K562 (cell line): ENCODE measurements at regions of chr7 and their contacts with region 1.

Region 1: GRCh38 chr7:155598810-155599210 is 45.7 kb upstream of the RBM33 start:
- DNase-seq: peak; percentile 82 to 90 (median 88)
- ATAC-seq: peak; percentile 83
- H3K4me3 ChIP-seq: no peak overlapping the region
- H3K27ac ChIP-seq: no peak overlapping the region
- H3K4me1 ChIP-seq: peaks cover 0 to 8% of the 10 kb centered on the region in 2 experiments; a peak in 2 of 5 replicates
- H3K27me3 ChIP-seq: peaks cover 51 to 65% of the 10 kb centered on the region in 2 experiments
- CTCF ChIP-seq: peak; percentile 92 to 100 (median 94)
- EP300 ChIP-seq: no peak
- POLR2A ChIP-seq: no peak
- RAD21 ChIP-seq: peak; percentile 82 to 93

Region 2: GRCh38 chr7:155724327-155725005 is 125.7 kb after region 1 on chr7:
- CTCF ChIA-PET with region 1: no interaction called
- POLR2A ChIA-PET with region 1: no interaction called
- in situ Hi-C with region 1: no loop called
- intact Hi-C with region 1: loop called (anchors 5 kb)
- DNase-seq: peak in 3 of 4 experiments; percentile 32 to 44 (median 41)
- ATAC-seq: peak; percentile 86
- H3K4me3 ChIP-seq: no peak overlapping the region
- H3K27ac ChIP-seq: no peak overlapping the region
- H3K4me1 ChIP-seq: peaks cover 0 to 3% of the 10 kb centered on the region in 2 experiments; a peak in 1 of 5 replicates
- H3K27me3 ChIP-seq: no peaks in the 10 kb centered on the region
- CTCF ChIP-seq: peak; percentile 46 to 50 (median 49)
- EP300 ChIP-seq: no peak
- POLR2A ChIP-seq: no peak
- RAD21 ChIP-seq: no peak

Region 3: DNA sequence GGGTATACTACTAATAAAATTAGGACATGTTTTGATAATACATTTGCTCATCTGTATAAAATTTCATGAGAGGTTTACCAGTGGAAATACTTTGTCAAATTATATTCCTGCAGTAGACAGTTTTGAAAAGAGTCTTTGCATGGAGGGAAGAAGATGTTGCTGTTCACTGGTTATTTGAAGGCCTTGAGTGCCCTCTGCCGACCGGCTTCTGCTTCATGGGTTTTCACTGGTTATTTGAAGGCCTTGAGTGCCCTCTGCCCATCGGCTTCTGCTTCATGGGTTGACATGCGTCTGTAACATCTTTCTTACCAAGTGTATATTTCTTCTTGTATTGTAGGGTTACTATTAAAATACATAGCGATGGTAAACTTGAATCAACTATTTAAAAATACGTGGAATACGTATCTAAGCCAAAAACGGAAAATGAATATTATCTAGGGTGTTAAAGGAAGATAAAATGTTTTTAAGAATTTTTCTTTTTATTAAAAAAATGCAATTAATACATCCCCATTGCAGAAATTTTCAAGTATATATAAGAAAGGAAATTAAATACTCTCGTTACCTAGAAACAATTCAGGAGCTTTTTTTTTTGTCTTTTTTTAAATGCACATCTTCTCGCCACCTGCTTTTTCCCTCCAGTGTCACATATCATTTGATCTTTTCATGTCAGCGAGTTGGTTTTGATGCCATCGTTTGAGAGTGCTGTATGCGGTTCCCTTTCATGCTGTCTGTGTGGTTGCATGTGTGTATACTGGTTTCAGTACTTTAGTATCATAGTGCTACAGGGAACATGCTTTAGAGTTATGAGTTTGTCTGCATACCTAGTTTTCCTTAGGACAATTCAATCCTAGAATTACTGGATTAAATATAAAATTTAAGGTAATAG is 140.1 kb after region 1 on chr7:
- CTCF ChIA-PET with region 1: interaction called, 39 read pairs
- POLR2A ChIA-PET with region 1: interaction called, 3 read pairs
- in situ Hi-C with region 1: no loop called
- intact Hi-C with region 1: loop called (anchors 1 kb)
- DNase-seq: peak in 1 of 4 experiments; percentile 80
- ATAC-seq: peak; percentile 88
- H3K4me3 ChIP-seq: no peak overlapping the region
- H3K27ac ChIP-seq: no peak overlapping the region
- H3K4me1 ChIP-seq: no peaks in the 10 kb centered on the region
- H3K27me3 ChIP-seq: no peaks in the 10 kb centered on the region
- CTCF ChIP-seq: peak; percentile 72 to 87 (median 87)
- EP300 ChIP-seq: no peak
- POLR2A ChIP-seq: no peak
- RAD21 ChIP-seq: peak; percentile 67 to 85

Region 4: DNA sequence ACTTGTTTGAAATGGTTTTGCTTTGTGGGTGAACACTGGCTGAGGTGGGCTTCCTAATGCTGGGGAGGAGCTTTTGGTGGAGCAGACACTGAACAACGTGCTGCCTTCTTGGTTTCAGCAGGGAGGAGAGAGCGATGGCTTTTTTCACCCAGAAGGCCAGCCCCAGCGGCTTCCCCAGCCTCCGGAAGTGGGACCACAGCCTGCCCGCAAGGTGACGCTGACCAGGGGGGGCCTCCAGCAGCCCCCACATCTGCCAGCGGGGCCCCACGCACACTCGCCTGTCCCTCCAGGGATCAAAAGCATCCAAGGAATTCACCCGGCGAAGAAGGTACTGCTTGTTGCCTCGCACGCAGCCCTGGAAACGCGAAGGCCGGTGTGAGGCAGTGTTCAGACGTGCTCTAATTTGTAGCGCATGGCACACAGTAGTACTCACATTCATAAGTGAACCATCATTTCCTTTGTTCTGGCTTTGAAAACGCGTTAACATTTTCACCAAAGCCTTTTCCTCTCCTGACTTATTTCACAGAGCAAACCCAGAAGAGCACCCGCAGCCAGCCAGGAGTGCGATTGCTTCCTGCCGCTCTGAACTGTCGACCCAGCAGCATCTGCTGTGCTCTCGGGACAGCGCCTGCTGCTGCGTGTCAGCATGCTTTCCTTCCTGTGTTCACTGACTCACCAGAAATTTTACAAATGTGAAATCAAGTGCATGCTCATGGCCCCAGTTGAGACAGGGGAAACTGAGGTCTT is 165.1 kb after region 1 on chr7:
- CTCF ChIA-PET with region 1: interaction called, 32 read pairs
- POLR2A ChIA-PET with region 1: interaction called, 5 read pairs
- in situ Hi-C with region 1: no loop called
- intact Hi-C with region 1: loop called (anchors 1 kb)
- DNase-seq: no peak
- ATAC-seq: no peak
- H3K4me3 ChIP-seq: no peak overlapping the region
- H3K27ac ChIP-seq: no peak overlapping the region
- H3K4me1 ChIP-seq: no peaks in the 10 kb centered on the region
- H3K27me3 ChIP-seq: no peaks in the 10 kb centered on the region
- CTCF ChIP-seq: no peak
- EP300 ChIP-seq: no peak
- POLR2A ChIP-seq: no peak
- RAD21 ChIP-seq: no peak

Region 5: DNA sequence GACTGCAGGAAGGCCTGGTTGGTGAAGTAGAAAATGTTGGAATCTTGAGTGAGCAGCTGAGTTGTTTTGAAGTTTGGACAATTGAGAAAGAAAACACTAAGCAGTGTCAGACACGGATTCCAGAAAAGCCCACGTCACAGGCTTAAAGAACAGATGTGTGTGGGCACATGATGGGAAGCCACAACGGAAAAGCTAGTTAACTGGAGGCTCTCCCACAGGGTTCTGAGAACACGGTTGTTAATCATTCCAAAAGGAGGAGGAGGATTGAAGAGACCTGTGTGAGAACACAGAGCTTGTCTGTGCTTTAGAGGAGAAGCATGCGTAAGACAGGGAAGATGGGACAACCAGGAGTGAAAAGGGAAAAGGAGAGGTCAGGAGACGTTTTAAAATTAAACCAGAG is 170.9 kb after region 1 on chr7:
- CTCF ChIA-PET with region 1: interaction called, 32 read pairs
- POLR2A ChIA-PET with region 1: interaction called, 5 read pairs
- in situ Hi-C with region 1: no loop called
- intact Hi-C with region 1: loop called (anchors 1 kb)
- DNase-seq: no peak
- ATAC-seq: no peak
- H3K4me3 ChIP-seq: no peak overlapping the region
- H3K27ac ChIP-seq: no peak overlapping the region
- H3K4me1 ChIP-seq: no peaks in the 10 kb centered on the region
- H3K27me3 ChIP-seq: no peaks in the 10 kb centered on the region
- CTCF ChIP-seq: no peak
- EP300 ChIP-seq: no peak
- POLR2A ChIP-seq: no peak
- RAD21 ChIP-seq: no peak

Region 6: DNA sequence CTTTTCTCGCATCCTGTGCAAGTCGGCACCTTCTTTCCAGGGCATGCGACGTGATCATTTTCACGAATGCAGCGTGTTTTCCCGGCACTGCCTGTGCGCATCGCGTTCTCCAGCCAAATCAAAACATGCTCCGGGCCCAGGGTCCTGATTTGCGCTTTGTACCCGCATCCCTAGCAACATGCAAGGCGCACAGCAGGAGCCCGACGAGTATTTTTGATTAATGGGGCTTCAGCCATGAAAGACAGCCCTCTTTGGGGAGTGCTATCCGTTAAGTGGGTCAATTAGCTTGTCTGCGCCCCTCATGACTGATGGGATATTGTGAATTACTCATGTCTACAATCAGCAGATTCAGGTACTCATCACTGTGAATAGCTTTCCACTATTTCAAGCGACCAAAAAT is 798.4 kb after region 1 on chr7:
- CTCF ChIA-PET with region 1: no interaction called
- POLR2A ChIA-PET with region 1: no interaction called
- in situ Hi-C with region 1: no loop called
- intact Hi-C with region 1: no loop called
- DNase-seq: no peak
- ATAC-seq: no peak
- H3K4me3 ChIP-seq: no peak overlapping the region
- H3K27ac ChIP-seq: no peak overlapping the region
- H3K4me1 ChIP-seq: no peaks in the 10 kb centered on the region; a peak in 1 of 5 replicates
- H3K27me3 ChIP-seq: peaks cover 16 to 21% of the 10 kb centered on the region in 2 experiments; a peak in 3 of 5 replicates
- CTCF ChIP-seq: no peak
- EP300 ChIP-seq: no peak
- POLR2A ChIP-seq: no peak
- RAD21 ChIP-seq: no peak